ENCODE measurements at regions of chr2 and their contacts with region 1.

Region 1: GRCh38 chr2:96116879-96117697 is 717 bp upstream of the ADRA2B start:
- DNase-seq: peak; percentile 28 to 54 (median 47)
- H3K4me3 ChIP-seq: peak overlapping the region in 6 of 7 experiments; percentile 42 to 73 (median 56)
- H3K27ac ChIP-seq: no peak overlapping the region
- H3K4me1 ChIP-seq: peaks cover 0 to 32% (median 27%) of the 10 kb centered on the region in 4 experiments
- H3K27me3 ChIP-seq: peaks cover 0 to 41% (median 8%) of the 10 kb centered on the region in 5 experiments

Region 2: DNA sequence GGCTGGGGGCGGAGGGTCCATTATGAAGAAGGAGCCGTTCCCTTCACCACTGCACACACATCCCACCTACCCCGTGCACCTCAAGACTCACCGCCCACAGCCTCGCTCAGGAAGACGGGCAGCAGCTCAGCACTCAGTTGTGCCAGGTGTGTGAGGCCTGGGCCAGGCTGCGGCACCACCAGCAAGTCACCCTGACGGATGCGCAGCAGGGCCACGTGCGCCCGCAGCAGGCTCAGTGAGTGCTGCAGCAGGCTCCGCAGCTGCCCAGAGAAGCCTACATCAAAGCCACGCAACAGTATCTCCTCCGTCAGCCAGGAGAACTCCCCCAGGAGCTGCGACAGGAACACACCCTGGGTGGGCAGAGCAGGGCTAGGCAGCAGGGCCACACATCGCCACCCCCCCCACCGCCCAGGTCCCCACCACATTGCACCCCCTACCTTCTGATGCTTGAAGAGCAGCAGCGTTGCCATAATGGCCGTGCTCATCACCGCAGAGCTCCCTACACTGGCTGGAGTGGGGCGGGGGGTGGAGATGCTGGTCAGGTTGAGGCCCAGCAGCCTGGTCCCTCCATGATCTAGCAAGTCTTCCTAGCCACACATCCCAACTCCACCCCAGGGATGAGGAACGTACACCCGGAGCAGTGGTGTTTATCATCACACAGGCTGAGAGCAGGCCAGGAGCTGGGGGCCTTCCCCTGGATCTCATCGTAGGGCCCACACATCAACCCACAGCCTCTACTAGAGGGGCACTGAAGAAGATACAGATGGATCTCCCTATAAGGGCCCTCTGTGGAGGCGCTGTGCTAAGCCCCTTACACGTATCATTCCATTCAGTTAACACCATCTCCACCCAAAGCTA is 92.5 kb before region 1 on chr2:
- CTCF ChIA-PET with region 1: interaction called, 17 read pairs
- POLR2A ChIA-PET with region 1: no interaction called
- DNase-seq: no peak
- H3K4me3 ChIP-seq: no peak overlapping the region
- H3K27ac ChIP-seq: no peak overlapping the region
- H3K4me1 ChIP-seq: no peaks in the 10 kb centered on the region
- H3K27me3 ChIP-seq: no peaks in the 10 kb centered on the region

Region 3: DNA sequence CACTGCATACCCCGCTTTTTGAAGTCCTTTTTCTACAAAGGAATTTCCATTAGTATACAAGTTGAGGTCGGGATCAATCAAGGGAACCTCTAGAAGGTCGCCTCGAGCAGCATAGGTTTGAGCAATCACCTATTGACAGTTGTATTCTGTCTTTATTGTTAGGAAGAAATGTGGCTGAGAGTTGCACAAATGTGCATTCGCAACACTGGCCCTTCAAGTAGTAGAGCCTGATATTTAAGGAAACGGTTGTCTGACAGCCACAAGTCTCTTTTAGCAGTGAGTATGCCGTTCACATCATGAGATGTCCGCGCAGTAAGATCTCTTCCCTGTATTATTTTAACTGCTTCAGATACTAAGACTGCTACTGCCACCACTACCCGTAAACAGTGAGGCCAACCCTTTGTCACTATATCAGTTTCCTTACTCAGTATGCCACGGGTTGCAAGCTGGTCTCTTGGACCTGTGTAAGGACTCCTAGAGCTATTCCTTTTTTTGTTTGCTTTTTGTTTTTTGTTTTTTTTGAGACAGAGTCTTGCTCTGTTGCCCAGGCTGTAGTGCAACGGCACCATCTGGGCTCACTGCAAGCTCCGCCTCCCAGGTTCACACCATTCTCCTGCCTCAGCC is 101.5 kb after region 1 on chr2:
- CTCF ChIA-PET with region 1: no interaction called
- POLR2A ChIA-PET with region 1: no interaction called
- DNase-seq: no peak
- H3K4me3 ChIP-seq: no peak overlapping the region
- H3K27ac ChIP-seq: no peak overlapping the region
- H3K4me1 ChIP-seq: peaks cover 0 to 4% (median 0%) of the 10 kb centered on the region in 4 experiments
- H3K27me3 ChIP-seq: no peaks in the 10 kb centered on the region

Measured in common myeloid progenitor, CD34-positive (primary cell).